ENCODE measurements at regions of chr7 and their contacts with region 1.

Region 1: DNA sequence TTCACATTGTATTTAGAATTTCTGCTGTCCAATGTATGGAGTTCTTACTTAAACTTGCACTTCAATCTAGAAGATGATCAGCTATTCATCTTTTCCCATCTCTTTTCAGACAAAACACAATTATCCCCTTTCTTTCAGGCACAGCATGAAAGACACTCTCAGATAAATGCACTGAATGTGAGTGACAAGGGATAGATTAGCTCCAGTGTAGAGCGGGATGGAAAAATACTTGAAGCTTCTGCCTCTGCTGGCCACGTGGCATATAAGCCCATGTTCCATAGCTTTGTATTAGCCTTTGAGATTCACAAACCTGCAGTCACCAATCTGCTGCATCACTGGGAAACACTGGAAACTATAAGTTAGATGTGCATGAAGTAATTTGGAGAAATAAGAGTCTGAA is 162.2 kb upstream of the FAM3C start:
- DNase-seq: no peak

Region 2: GRCh38 chr7:121591926-121592325 is 33.6 kb after region 1 on chr7:
- in situ Hi-C with region 1: loop called (anchors 5 kb)
- DNase-seq: no peak